ENCODE measurements at regions of chr10 and their contacts with region 1.

Region 1: GRCh38 chr10:15300697-15301096 is 70.4 kb downstream of the FAM171A1 start:
- DNase-seq: no peak
- H3K4me3 ChIP-seq: no peak overlapping the region
- H3K27ac ChIP-seq: no peak overlapping the region
- H3K4me1 ChIP-seq: no peaks in the 10 kb centered on the region
- H3K27me3 ChIP-seq: no peaks in the 10 kb centered on the region
- CTCF ChIP-seq: no peak
- EP300 ChIP-seq: no peak
- POLR2A ChIP-seq: no peak
- RAD21 ChIP-seq: no peak

Region 2: DNA sequence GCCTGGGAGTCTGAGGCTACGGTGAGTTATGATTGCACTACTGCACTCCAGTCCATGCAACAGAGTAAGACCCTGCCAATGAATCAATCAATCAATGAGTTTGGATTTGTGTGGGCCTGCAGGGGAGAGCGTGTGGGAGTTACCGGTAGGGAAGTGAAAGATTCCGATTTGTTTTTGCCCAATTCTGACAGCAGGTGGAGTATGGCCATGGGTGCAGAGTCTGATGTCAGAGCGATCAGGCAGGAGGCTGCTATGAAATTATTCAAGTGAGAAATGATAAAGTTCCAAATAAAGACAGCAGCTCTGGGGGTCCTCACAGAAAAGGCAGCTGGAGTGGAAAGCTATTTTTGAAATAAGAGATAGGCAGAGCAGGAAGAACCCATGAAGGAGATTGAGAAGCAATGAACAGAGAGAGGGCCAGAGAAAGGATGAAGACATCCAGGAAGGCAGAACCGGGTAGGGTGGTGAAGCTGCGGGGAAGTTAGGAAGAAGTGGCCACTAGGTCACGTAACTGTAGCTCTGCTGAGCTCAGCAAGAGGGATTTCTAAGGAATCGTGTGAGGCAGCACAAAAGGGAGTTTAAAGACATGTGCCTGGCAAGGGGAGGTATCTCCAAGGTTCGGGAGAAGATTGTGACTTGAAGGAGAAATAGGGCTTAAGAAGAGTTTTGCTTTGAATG is 38.5 kb before region 1 on chr10:
- CTCF ChIA-PET with region 1: interaction called, 23 read pairs
- POLR2A ChIA-PET with region 1: no interaction called
- DNase-seq: no peak
- H3K4me3 ChIP-seq: no peak overlapping the region
- H3K27ac ChIP-seq: no peak overlapping the region
- H3K4me1 ChIP-seq: no peaks in the 10 kb centered on the region
- H3K27me3 ChIP-seq: no peaks in the 10 kb centered on the region
- CTCF ChIP-seq: peak in 2 of 3 experiments; percentile 23 to 33; a peak in 2 of 4 replicates
- EP300 ChIP-seq: no peak
- POLR2A ChIP-seq: no peak
- RAD21 ChIP-seq: peak; percentile 23 to 36; a peak in 2 of 4 replicates

Region 3: DNA sequence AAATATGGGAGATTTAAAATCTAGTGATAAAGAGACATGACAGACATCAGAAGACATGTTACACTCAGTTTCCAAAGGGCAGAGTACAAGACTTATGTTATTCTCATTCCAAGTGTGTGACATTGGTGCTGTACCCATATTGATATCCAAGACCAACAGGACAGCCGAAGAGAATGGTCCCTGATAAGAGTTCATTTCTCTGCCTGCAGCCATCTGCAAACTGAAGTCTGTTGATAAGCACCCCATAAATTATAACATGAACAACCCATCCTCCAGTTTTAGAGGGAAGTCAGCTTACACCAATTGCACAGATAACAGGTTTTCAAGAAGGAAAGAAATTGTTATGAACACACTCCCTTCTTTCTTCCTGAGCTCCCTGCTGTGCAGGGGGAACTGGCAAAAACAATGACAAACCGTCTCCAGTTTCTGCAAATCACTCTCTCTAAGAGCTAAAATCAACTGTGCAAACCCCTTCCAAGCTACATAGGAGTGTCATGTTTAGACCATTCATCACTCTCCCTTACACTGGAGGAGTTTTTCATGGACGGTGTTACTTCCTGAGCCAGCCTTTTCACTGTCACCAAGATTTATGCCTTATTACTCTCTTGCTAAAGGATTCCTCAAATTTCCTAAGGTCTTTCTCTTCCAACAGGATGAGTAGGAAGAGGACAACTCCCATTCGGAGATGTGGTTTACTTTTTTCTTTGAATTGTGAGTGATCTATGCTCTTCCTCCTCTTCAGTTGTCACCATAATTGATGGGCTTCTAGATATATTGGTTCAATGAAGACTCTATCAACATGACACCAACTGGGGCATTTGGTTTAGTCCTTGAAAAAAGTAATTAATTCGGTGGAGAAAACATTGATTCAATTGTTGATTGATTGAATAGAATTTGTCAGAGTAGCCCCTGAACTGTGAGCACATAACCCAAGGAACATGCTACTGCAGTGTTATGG is 150.7 kb after region 1 on chr10:
- CTCF ChIA-PET with region 1: no interaction called
- POLR2A ChIA-PET with region 1: no interaction called
- DNase-seq: no peak
- H3K4me3 ChIP-seq: no peak overlapping the region
- H3K27ac ChIP-seq: no peak overlapping the region
- H3K4me1 ChIP-seq: no peaks in the 10 kb centered on the region
- H3K27me3 ChIP-seq: no peaks in the 10 kb centered on the region; a peak in 2 of 7 replicates
- CTCF ChIP-seq: no peak
- EP300 ChIP-seq: no peak
- POLR2A ChIP-seq: no peak
- RAD21 ChIP-seq: no peak